ENCODE measurements at regions of chr18 and their contacts with region 1.

Region 1: DNA sequence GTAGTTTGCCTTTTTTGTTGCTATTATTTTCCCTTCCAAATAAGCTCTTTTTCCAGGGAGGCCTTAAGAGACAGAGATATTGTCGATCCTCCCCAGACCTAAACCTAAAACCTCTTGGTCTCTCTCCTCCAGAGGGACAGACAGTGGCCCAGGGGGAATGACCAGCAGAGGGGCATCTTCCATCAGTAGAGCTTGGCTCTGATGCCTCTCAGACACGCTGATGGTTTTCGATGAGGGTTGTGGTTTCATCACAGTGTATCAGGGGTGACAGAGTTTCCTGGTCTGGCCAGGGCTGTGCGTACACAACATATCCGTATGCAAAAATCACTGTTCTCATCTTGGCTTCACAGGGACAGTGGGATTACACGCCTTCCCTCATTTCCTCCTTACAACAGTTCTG is 68.6 kb downstream of the GATA6 start:
- DNase-seq: peak; percentile 57 to 74
- ATAC-seq: peak; percentile 94 to 100 (median 97)
- H3K4me3 ChIP-seq: no peak overlapping the region
- H3K4me3 Mint-ChIP-seq: peak overlapping the region; percentile 11
- H3K27ac ChIP-seq: no peak overlapping the region
- H3K27ac Mint-ChIP-seq: peak overlapping the region; percentile 61 to 75
- H3K4me1 ChIP-seq: peaks cover 15% of the 10 kb centered on the region
- H3K4me1 Mint-ChIP-seq: peaks cover 16 to 20% of the 10 kb centered on the region in 2 donors
- H3K27me3 ChIP-seq: no peaks in the 10 kb centered on the region
- H3K27me3 Mint-ChIP-seq: peaks cover 18 to 30% of the 10 kb centered on the region in 2 donors
- CTCF ChIP-seq: peak; percentile 63

Region 2: DNA sequence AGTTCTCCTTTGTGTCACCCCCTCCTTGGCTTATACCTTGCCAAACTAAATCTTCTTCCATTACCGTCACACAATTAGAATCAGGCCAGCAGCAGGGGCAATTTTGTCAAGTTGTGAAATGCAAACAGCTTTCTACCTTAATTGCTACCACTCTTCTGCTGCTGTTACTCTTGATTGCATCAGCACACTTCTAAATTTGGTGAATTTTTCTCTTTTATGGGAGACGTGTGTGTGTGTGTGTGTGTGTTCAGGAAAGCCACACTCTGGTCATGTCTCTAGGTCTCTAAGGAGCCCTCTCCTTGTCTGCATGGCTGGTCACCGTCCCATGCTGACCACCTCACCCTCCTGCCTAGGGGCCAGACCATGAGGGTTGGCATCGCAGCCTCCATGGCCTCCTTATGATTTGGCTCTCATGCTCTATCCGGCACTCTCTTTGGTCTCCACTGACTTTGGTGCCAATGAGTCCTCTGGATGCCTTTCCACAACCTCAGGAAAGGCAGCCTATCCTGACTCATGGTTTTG is 19.0 kb after region 1 on chr18:
- intact Hi-C with region 1: loop called (anchors 1 kb)
- DNase-seq: no peak
- ATAC-seq: no peak
- H3K4me3 ChIP-seq: no peak overlapping the region
- H3K4me3 Mint-ChIP-seq: no peak overlapping the region
- H3K27ac ChIP-seq: no peak overlapping the region
- H3K27ac Mint-ChIP-seq: peak overlapping the region in 1 of 2 donors; percentile 48
- H3K4me1 ChIP-seq: peaks cover 33% of the 10 kb centered on the region
- H3K4me1 Mint-ChIP-seq: peaks cover 45 to 57% of the 10 kb centered on the region in 2 donors
- H3K27me3 ChIP-seq: no peaks in the 10 kb centered on the region
- H3K27me3 Mint-ChIP-seq: peaks cover 28 to 34% of the 10 kb centered on the region in 2 donors
- CTCF ChIP-seq: no peak

Region 3: GRCh38 chr18:22282311-22283112 is 44.5 kb after region 1 on chr18:
- intact Hi-C with region 1: loop called (anchors 1 kb)
- DNase-seq: peak; percentile 72 to 80
- ATAC-seq: peak; percentile 83 to 92 (median 92)
- H3K4me3 ChIP-seq: no peak overlapping the region
- H3K4me3 Mint-ChIP-seq: peak overlapping the region; percentile 62
- H3K27ac ChIP-seq: peak overlapping the region; percentile 89
- H3K27ac Mint-ChIP-seq: peak overlapping the region; percentile 94 to 96
- H3K4me1 ChIP-seq: peaks cover 11% of the 10 kb centered on the region
- H3K4me1 Mint-ChIP-seq: peaks cover 27 to 40% of the 10 kb centered on the region in 2 donors
- H3K27me3 ChIP-seq: no peaks in the 10 kb centered on the region
- H3K27me3 Mint-ChIP-seq: peaks cover 3 to 7% of the 10 kb centered on the region in 2 donors
- CTCF ChIP-seq: no peak

Region 4: GRCh38 chr18:22342625-22343024 is 104.6 kb after region 1 on chr18:
- intact Hi-C with region 1: loop called (anchors 2 kb)
- DNase-seq: peak; percentile 38 to 74
- ATAC-seq: peak; percentile 15 to 28 (median 23)
- H3K4me3 ChIP-seq: no peak overlapping the region
- H3K4me3 Mint-ChIP-seq: peak overlapping the region; percentile 61
- H3K27ac ChIP-seq: peak overlapping the region; percentile 94
- H3K27ac Mint-ChIP-seq: peak overlapping the region; percentile 92 to 97
- H3K4me1 ChIP-seq: peaks cover 87% of the 10 kb centered on the region
- H3K4me1 Mint-ChIP-seq: peaks cover 77 to 89% of the 10 kb centered on the region in 2 donors
- H3K27me3 ChIP-seq: no peaks in the 10 kb centered on the region
- H3K27me3 Mint-ChIP-seq: no peaks in the 10 kb centered on the region
- CTCF ChIP-seq: no peak

Region 5: GRCh38 chr18:22363867-22364463 is 125.9 kb after region 1 on chr18:
- intact Hi-C with region 1: loop called (anchors 1 kb)
- DNase-seq: peak in 1 of 2 donors; percentile 58
- ATAC-seq: peak; percentile 53 to 80 (median 71)
- H3K4me3 ChIP-seq: no peak overlapping the region
- H3K4me3 Mint-ChIP-seq: no peak overlapping the region
- H3K27ac ChIP-seq: no peak overlapping the region
- H3K27ac Mint-ChIP-seq: no peak overlapping the region
- H3K4me1 ChIP-seq: peaks cover 2% of the 10 kb centered on the region
- H3K4me1 Mint-ChIP-seq: no peaks in the 10 kb centered on the region
- H3K27me3 ChIP-seq: no peaks in the 10 kb centered on the region
- H3K27me3 Mint-ChIP-seq: peaks cover 0 to 6% of the 10 kb centered on the region in 2 donors
- CTCF ChIP-seq: peak; percentile 38

Region 6: GRCh38 chr18:22465859-22466457 is 227.9 kb after region 1 on chr18:
- intact Hi-C with region 1: loop called (anchors 5 kb)
- DNase-seq: peak; percentile 50 to 71
- ATAC-seq: peak; percentile 96 to 100 (median 97)
- H3K4me3 ChIP-seq: no peak overlapping the region
- H3K4me3 Mint-ChIP-seq: peak overlapping the region; percentile 86
- H3K27ac ChIP-seq: no peak overlapping the region
- H3K27ac Mint-ChIP-seq: peak overlapping the region; percentile 83 to 86
- H3K4me1 ChIP-seq: peaks cover 24% of the 10 kb centered on the region
- H3K4me1 Mint-ChIP-seq: peaks cover 43 to 49% of the 10 kb centered on the region in 2 donors
- H3K27me3 ChIP-seq: no peaks in the 10 kb centered on the region
- H3K27me3 Mint-ChIP-seq: peaks cover 11 to 15% of the 10 kb centered on the region in 2 donors
- CTCF ChIP-seq: no peak

Region 7: GRCh38 chr18:22703883-22704585 is 466.0 kb after region 1 on chr18:
- intact Hi-C with region 1: loop called (anchors 2 kb)
- DNase-seq: peak in 1 of 2 donors; percentile 57
- ATAC-seq: peak; percentile 53 to 73 (median 60)
- H3K4me3 ChIP-seq: no peak overlapping the region
- H3K4me3 Mint-ChIP-seq: no peak overlapping the region
- H3K27ac ChIP-seq: no peak overlapping the region
- H3K27ac Mint-ChIP-seq: no peak overlapping the region
- H3K4me1 ChIP-seq: no peaks in the 10 kb centered on the region
- H3K4me1 Mint-ChIP-seq: no peaks in the 10 kb centered on the region
- H3K27me3 ChIP-seq: no peaks in the 10 kb centered on the region
- H3K27me3 Mint-ChIP-seq: peaks cover 4 to 23% of the 10 kb centered on the region in 2 donors
- CTCF ChIP-seq: peak; percentile 81